ENCODE measurements at regions of chr18 and their contacts with region 1.

Region 1: DNA sequence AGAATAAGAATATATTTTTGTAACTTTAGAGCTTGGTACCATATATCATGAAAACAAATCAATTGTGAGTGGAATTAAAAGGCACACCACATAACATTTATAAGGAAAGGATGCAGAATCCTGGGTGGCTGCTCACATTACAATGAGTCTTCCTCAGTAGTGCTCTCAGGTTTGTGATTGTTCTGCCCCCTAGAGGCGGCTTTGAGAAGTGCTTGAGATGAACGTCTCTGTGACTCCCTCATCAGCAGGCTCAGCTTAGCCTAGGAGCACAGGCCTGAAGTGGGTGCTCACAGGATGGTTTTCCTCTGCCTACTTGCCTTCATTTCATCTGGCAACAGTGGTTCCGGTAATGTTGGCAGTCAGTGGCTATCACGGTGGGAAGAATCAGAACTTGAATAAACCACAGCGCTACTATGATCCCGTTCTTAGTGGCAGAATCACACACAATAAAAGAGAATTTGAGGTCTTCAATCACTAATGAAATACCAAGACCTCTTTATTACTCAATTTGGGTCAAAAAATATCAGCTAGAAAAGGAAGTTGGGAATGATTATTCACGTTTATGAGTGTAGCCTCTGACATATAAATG is 38.1 kb upstream of the B4GALT6 start:
- DNase-seq: peak; percentile 43
- ATAC-seq: peak; percentile 100
- H3K4me3 ChIP-seq: no peak overlapping the region
- H3K27ac ChIP-seq: no peak overlapping the region
- H3K4me1 ChIP-seq: no peaks in the 10 kb centered on the region
- H3K27me3 ChIP-seq: no peaks in the 10 kb centered on the region
- CTCF ChIP-seq: peak; percentile 88 to 92 (median 90)
- EP300 ChIP-seq: no peak
- POLR2A ChIP-seq: no peak
- RAD21 ChIP-seq: peak; percentile 89

Region 2: GRCh38 chr18:30971338-30971956 is 751.0 kb before region 1 on chr18:
- CTCF ChIA-PET with region 1: no interaction called
- POLR2A ChIA-PET with region 1: no interaction called
- RAD21 ChIA-PET with region 1: no interaction called
- SMC1A ChIA-PET with region 1: no interaction called
- in situ Hi-C with region 1: no loop called
- intact Hi-C with region 1: loop called (anchors 10 kb)
- DNase-seq: no peak
- ATAC-seq: peak; percentile 80
- H3K4me3 ChIP-seq: no peak overlapping the region
- H3K27ac ChIP-seq: no peak overlapping the region
- H3K4me1 ChIP-seq: no peaks in the 10 kb centered on the region
- H3K27me3 ChIP-seq: no peaks in the 10 kb centered on the region; a peak in 1 of 4 replicates
- CTCF ChIP-seq: peak; percentile 21 to 49 (median 41); a peak in 4 of 6 replicates
- EP300 ChIP-seq: no peak
- POLR2A ChIP-seq: no peak
- RAD21 ChIP-seq: peak; percentile 34; the same call in 1 of the 2 replicates

Region 3: GRCh38 chr18:31396796-31397612 is 325.5 kb before region 1 on chr18:
- CTCF ChIA-PET with region 1: no interaction called
- POLR2A ChIA-PET with region 1: no interaction called
- RAD21 ChIA-PET with region 1: no interaction called
- SMC1A ChIA-PET with region 1: no interaction called
- in situ Hi-C with region 1: no loop called
- intact Hi-C with region 1: no loop called
- DNase-seq: no peak
- ATAC-seq: no peak
- H3K4me3 ChIP-seq: no peak overlapping the region
- H3K27ac ChIP-seq: no peak overlapping the region
- H3K4me1 ChIP-seq: no peaks in the 10 kb centered on the region
- H3K27me3 ChIP-seq: no peaks in the 10 kb centered on the region
- CTCF ChIP-seq: no peak
- EP300 ChIP-seq: no peak
- POLR2A ChIP-seq: no peak
- RAD21 ChIP-seq: no peak

Region 4: DNA sequence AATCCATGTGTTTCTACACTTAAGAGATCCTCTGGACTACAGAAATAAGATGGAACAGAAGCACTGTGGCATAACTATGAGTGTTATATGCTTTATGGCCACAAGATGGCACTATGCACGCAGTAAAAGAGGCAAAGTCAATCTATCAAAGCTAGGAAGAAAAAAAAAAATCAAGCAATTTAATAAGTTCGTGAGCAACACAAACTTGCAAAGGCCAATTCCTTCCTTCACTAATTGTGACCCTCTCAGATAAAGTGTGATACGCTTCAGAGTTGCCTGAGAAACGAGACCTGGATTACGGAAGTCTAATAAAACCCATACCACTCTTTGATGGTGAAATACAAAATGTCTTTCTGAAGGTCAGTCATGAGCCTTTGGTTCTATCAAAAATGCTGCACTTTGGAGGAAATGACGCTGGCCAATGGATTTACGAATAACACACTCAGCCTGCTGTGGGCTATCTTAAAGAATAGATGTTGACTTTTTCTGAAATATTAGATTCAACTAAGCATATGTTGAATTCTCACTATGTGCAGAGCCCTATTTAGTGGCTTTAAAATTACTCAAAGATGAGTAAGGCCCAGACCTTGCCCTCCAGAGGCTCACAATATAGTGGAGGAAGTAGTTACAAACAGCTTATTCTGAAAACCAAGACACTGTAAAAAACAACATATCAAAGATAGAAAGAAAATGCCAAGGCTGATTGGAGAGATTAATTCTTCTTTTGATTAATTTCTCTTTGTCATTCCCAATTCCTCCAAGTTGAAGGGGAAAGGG is 166.3 kb before region 1 on chr18:
- CTCF ChIA-PET with region 1: interaction called, 224 read pairs
- POLR2A ChIA-PET with region 1: interaction called, 3 read pairs
- RAD21 ChIA-PET with region 1: interaction called, 67 read pairs
- SMC1A ChIA-PET with region 1: interaction called, 87 read pairs
- in situ Hi-C with region 1: loop called (anchors 5 kb)
- intact Hi-C with region 1: loop called (anchors 1 kb)
- DNase-seq: peak; percentile 39
- ATAC-seq: peak; percentile 88
- H3K4me3 ChIP-seq: no peak overlapping the region
- H3K27ac ChIP-seq: no peak overlapping the region
- H3K4me1 ChIP-seq: no peaks in the 10 kb centered on the region
- H3K27me3 ChIP-seq: no peaks in the 10 kb centered on the region
- CTCF ChIP-seq: peak; percentile 62 to 79 (median 72); a peak in 5 of 6 replicates
- EP300 ChIP-seq: no peak
- POLR2A ChIP-seq: no peak
- RAD21 ChIP-seq: peak; percentile 96

Region 5: GRCh38 chr18:31610286-31611205 is 111.9 kb before region 1 on chr18:
- CTCF ChIA-PET with region 1: interaction called, 29 read pairs
- POLR2A ChIA-PET with region 1: no interaction called
- RAD21 ChIA-PET with region 1: no interaction called
- SMC1A ChIA-PET with region 1: interaction called, 7 read pairs
- in situ Hi-C with region 1: no loop called
- intact Hi-C with region 1: loop called (anchors 5 kb)
- DNase-seq: no peak
- ATAC-seq: peak; percentile 80
- H3K4me3 ChIP-seq: no peak overlapping the region
- H3K27ac ChIP-seq: no peak overlapping the region
- H3K4me1 ChIP-seq: peaks cover 5% of the 10 kb centered on the region
- H3K27me3 ChIP-seq: no peaks in the 10 kb centered on the region
- CTCF ChIP-seq: 0 out of 6 replicates have a peak, but pooled peaks of 2 of the 3 experiments have one; percentile 5 to 17
- EP300 ChIP-seq: no peak
- POLR2A ChIP-seq: no peak
- RAD21 ChIP-seq: no peak

Region 6: GRCh38 chr18:31658670-31659575 is 63.5 kb before region 1 on chr18:
- CTCF ChIA-PET with region 1: interaction called, 10 read pairs
- POLR2A ChIA-PET with region 1: no interaction called
- RAD21 ChIA-PET with region 1: interaction called, 8 read pairs
- SMC1A ChIA-PET with region 1: interaction called, 11 read pairs
- in situ Hi-C with region 1: no loop called
- intact Hi-C with region 1: no loop called
- DNase-seq: peak; percentile 89
- ATAC-seq: peak; percentile 81
- H3K4me3 ChIP-seq: peak overlapping the region; percentile 56
- H3K27ac ChIP-seq: peak overlapping the region; percentile 98
- H3K4me1 ChIP-seq: peaks cover 37% of the 10 kb centered on the region
- H3K27me3 ChIP-seq: no peaks in the 10 kb centered on the region
- CTCF ChIP-seq: no peak
- EP300 ChIP-seq: peak in 1 of 2 experiments; percentile 78; a peak in 2 of 4 replicates
- POLR2A ChIP-seq: no peak; the same call in 1 of the 2 replicates
- RAD21 ChIP-seq: no peak

Region 7: GRCh38 chr18:31694297-31694696 is 28.2 kb before region 1 on chr18:
- CTCF ChIA-PET with region 1: interaction called, 20 read pairs
- POLR2A ChIA-PET with region 1: no interaction called
- RAD21 ChIA-PET with region 1: interaction called, 5 read pairs
- SMC1A ChIA-PET with region 1: interaction called, 8 read pairs
- in situ Hi-C with region 1: no loop called
- intact Hi-C with region 1: no loop called
- DNase-seq: no peak
- ATAC-seq: no peak
- H3K4me3 ChIP-seq: no peak overlapping the region
- H3K27ac ChIP-seq: no peak overlapping the region
- H3K4me1 ChIP-seq: no peaks in the 10 kb centered on the region
- H3K27me3 ChIP-seq: no peaks in the 10 kb centered on the region
- CTCF ChIP-seq: no peak
- EP300 ChIP-seq: no peak
- POLR2A ChIP-seq: no peak
- RAD21 ChIP-seq: no peak

Region 8: DNA sequence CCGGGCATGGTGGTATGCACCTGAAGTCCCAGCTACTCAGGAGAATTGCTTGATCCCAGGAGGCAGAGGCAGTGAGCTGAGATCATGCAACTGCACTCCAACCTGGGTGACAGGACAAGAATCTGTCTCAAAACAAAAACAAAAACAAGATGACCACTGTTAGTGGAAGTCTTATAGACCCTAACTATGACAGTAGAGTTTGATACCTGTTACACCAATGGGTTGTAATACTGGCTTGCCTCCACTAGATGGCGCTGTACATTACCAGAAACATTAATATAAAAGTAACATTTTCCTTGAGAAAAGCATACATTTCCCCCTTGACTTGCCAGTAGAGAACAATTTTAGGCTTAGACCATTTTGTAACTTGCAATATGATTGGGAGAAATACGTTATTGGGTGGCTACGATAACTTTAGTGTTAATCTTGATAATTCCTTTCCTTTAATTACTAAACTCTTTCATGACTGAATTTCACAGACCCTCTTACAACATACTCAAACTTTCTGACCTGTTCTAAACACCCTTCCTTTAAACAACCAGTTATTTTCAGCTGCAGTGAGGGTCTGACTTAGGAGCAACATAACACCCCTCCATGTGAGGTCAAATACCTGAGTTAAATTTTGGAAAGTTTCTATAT is 18.8 kb after region 1 on chr18:
- CTCF ChIA-PET with region 1: interaction called, 28 read pairs
- POLR2A ChIA-PET with region 1: no interaction called
- RAD21 ChIA-PET with region 1: interaction called, 7 read pairs
- SMC1A ChIA-PET with region 1: interaction called, 8 read pairs
- in situ Hi-C with region 1: no loop called
- intact Hi-C with region 1: no loop called
- DNase-seq: peak; percentile 16
- ATAC-seq: peak; percentile 72
- H3K4me3 ChIP-seq: no peak overlapping the region
- H3K27ac ChIP-seq: no peak overlapping the region
- H3K4me1 ChIP-seq: no peaks in the 10 kb centered on the region
- H3K27me3 ChIP-seq: no peaks in the 10 kb centered on the region
- CTCF ChIP-seq: peak; percentile 59 to 77 (median 74)
- EP300 ChIP-seq: no peak
- POLR2A ChIP-seq: no peak
- RAD21 ChIP-seq: peak; percentile 72

Region 9: DNA sequence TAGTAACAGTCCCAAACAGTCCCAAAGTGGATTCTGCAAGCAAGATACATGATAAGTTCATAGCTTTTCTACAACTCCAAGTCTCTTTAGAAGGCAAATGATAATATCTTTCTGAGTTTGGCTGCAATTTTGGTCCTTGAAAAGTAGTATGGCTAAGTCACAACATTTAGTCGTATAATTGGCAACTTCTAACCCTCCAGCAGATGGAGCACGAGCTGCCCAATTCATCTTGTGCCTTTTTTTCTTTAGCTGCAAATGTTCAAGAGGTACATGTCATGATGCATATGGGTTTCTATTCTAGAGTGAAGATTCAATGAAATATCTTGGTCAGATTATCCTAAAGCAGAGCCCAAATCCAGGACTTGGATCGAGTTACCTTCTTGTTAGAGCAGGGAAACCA is 1177.4 kb after region 1 on chr18:
- CTCF ChIA-PET with region 1: no interaction called
- POLR2A ChIA-PET with region 1: no interaction called
- RAD21 ChIA-PET with region 1: no interaction called
- SMC1A ChIA-PET with region 1: no interaction called
- in situ Hi-C with region 1: no loop called
- intact Hi-C with region 1: no loop called
- DNase-seq: no peak
- ATAC-seq: no peak
- H3K4me3 ChIP-seq: no peak overlapping the region
- H3K27ac ChIP-seq: no peak overlapping the region
- H3K4me1 ChIP-seq: no peaks in the 10 kb centered on the region
- H3K27me3 ChIP-seq: no peaks in the 10 kb centered on the region
- CTCF ChIP-seq: no peak
- EP300 ChIP-seq: no peak
- POLR2A ChIP-seq: no peak
- RAD21 ChIP-seq: no peak

Measured in GM12878 (cell line).